ENCODE measurements at regions of chr19 and their contacts with region 1.

Region 1: GRCh38 chr19:5961969-5962945 is 15.7 kb downstream of the RANBP3 start:
- DNase-seq: peak; percentile 66
- ATAC-seq: peak; percentile 70
- H3K4me3 ChIP-seq: no peak overlapping the region
- H3K27ac ChIP-seq: peak overlapping the region; percentile 71
- H3K4me1 ChIP-seq: peaks cover 51% of the 10 kb centered on the region
- H3K27me3 ChIP-seq: no peaks in the 10 kb centered on the region
- CTCF ChIP-seq: no peak
- POLR2A ChIP-seq: no peak
- RAD21 ChIP-seq: no peak

Region 2: DNA sequence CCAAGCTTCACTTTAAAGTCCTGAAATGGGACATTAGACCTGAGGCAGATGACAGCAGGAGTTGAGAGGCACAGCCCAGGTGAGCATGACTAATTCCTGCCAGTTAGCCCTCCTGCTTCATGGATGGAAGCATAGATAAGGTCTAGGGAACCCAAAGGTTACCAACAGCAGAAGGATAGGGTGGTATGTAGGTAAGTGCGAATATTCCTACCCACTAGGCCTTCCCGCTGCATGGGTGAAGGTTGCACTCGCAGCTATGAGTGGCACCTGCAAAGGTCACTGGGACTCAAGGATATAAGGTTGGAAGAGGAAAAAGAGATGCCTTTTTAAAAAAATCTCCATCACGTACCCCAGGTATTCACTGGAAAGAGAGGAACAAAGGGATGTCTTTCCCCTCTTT is 329.7 kb after region 1 on chr19:
- CTCF ChIA-PET with region 1: no interaction called
- POLR2A ChIA-PET with region 1: no interaction called
- dilution Hi-C with region 1: no loop called
- in situ Hi-C with region 1: no loop called
- intact Hi-C with region 1: no loop called
- DNase-seq: no peak
- ATAC-seq: no peak
- H3K4me3 ChIP-seq: no peak overlapping the region
- H3K27ac ChIP-seq: no peak overlapping the region
- H3K4me1 ChIP-seq: no peaks in the 10 kb centered on the region
- H3K27me3 ChIP-seq: no peaks in the 10 kb centered on the region
- CTCF ChIP-seq: no peak
- POLR2A ChIP-seq: no peak
- RAD21 ChIP-seq: no peak

Region 3: GRCh38 chr19:6470173-6470572 is 507.9 kb after region 1 on chr19:
- CTCF ChIA-PET with region 1: no interaction called
- POLR2A ChIA-PET with region 1: interaction called, 11 read pairs
- dilution Hi-C with region 1: no loop called
- in situ Hi-C with region 1: no loop called
- intact Hi-C with region 1: no loop called
- DNase-seq: no peak
- ATAC-seq: no peak
- H3K4me3 ChIP-seq: no peak overlapping the region
- H3K27ac ChIP-seq: no peak overlapping the region
- H3K4me1 ChIP-seq: no peaks in the 10 kb centered on the region
- H3K27me3 ChIP-seq: peaks cover 16% of the 10 kb centered on the region
- CTCF ChIP-seq: no peak
- POLR2A ChIP-seq: no peak
- RAD21 ChIP-seq: no peak